ENCODE measurements at regions of chr5 and their contacts with region 1.

Region 1: GRCh38 chr5:179023528-179024430 is at the start of gene ZNF879:
- DNase-seq: peak; percentile 94 to 97
- H3K4me3 ChIP-seq: peak within 1 kb of the TSS; percentile 63 to 80 (median 79)
- H3K27ac ChIP-seq: peak within 1 kb of the TSS; percentile 71 to 82 (median 75)
- H3K4me1 ChIP-seq: peaks cover 11 to 12% of the 10 kb centered on the region in 2 donors
- H3K27me3 ChIP-seq: no peaks in the 10 kb centered on the region
- CTCF ChIP-seq: no peak
- POLR2A ChIP-seq: peak in 1 of 2 donors; percentile 51
- total RNA-seq, gene ZNF879: 6.6 to 18.3 (median 7.8) TPM

Region 2: DNA sequence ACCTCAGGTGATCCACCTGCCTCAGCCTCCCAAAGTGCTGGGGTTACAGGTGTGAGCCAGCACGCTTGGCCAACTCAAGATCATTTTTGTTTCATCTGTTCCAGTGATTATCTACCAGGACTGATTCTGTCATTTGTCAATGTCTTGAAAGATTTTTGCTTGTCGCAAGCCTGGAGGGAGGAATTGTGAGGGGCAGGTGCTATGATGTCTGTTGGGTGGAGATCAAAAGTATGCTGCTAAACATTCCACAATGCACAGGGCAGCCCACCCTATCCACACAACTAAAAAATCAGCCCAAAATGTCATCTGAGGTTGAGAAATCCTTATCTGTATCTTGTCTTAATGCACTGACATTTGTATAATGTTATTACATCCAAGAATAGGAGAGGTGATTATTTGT is 142.7 kb before region 1 on chr5:
- intact Hi-C with region 1: loop called (anchors 10 kb)
- DNase-seq: no peak
- H3K4me3 ChIP-seq: no peak overlapping the region
- H3K27ac ChIP-seq: no peak overlapping the region
- H3K4me1 ChIP-seq: no peaks in the 10 kb centered on the region
- H3K27me3 ChIP-seq: no peaks in the 10 kb centered on the region
- CTCF ChIP-seq: no peak
- POLR2A ChIP-seq: no peak

Region 3: DNA sequence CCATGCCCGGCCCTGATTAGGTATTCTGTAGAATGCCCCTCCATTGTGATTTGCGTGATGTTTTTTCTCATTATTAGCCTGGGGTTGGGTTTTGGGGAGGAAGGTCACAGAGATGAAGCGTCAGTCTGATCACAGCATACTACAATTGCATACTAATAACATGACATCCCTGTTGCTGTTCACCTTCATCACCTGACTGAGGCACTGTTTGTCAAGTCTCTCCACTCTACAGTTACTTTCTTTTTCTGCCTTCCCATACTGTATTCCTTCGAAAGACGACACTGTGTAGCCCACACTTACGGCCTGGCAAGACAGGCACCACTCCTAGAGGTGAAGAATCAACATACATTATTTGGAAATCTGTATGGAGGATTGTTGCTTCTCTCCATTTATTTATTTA is 41.9 kb after region 1 on chr5:
- intact Hi-C with region 1: loop called (anchors 5 kb)
- DNase-seq: no peak
- H3K4me3 ChIP-seq: no peak overlapping the region
- H3K27ac ChIP-seq: no peak overlapping the region
- H3K4me1 ChIP-seq: peaks cover 6 to 7% of the 10 kb centered on the region in 2 donors
- H3K27me3 ChIP-seq: no peaks in the 10 kb centered on the region
- CTCF ChIP-seq: no peak
- POLR2A ChIP-seq: no peak